ENCODE measurements at regions of chr14 and their contacts with region 1.

Region 1: DNA sequence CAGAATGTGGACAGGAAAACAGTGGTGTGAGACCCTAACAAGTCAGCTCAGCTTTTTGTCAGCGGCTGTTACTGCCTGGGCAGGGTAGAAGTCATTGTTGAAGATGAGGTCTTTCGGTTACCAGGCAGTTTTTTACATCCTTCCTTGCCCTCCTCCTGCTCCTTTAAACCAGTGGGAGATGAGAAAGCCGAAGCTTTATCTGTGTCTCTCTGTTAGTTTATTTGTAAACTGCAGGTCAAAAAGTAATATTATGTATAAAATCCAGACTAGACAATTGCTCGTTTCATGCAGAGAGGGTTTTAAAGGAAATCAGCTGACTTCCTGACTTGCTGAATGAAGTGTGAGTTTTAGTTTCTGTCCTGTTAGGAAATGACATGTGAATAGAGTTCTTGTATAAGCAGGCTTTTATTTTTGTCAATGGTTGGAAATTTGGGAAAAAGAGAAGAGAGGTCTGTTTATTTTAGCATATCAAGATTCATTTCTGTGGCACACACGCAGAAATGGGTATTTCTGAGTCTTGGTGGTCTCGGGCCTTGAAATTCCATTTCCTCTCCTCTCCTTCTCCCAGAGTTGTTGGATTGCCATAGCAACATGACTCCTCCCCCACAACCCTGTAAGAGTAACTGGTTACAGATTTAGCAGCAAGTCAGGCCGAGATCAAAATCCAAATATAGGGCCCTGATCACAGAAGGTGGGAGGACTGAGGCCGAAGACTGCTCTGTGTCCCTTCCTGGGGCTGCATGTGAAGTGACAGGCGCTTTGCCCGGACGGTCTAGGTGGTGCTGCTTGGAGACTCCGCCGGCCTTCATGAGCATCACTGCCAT is 60.8 kb downstream of the SAMD4A start:
- DNase-seq: peak; percentile 57
- ATAC-seq: peak; percentile 82
- H3K4me3 ChIP-seq: peak overlapping the region; percentile 39; the same call in 1 of the 2 replicates
- H3K27ac ChIP-seq: peak overlapping the region; percentile 51
- H3K4me1 ChIP-seq: peaks cover 19% of the 10 kb centered on the region
- H3K27me3 ChIP-seq: no peaks in the 10 kb centered on the region
- CTCF ChIP-seq: no peak
- EP300 ChIP-seq: 0 out of 4 replicates have a peak, but pooled peaks of 1 of the 2 experiments have one; percentile 35
- POLR2A ChIP-seq: no peak
- RAD21 ChIP-seq: no peak

Region 2: GRCh38 chr14:53915364-53916014 is 712.3 kb before region 1 on chr14:
- CTCF ChIA-PET with region 1: no interaction called
- POLR2A ChIA-PET with region 1: no interaction called
- RAD21 ChIA-PET with region 1: no interaction called
- SMC1A ChIA-PET with region 1: no interaction called
- in situ Hi-C with region 1: no loop called
- intact Hi-C with region 1: no loop called
- DNase-seq: no peak
- ATAC-seq: no peak
- H3K4me3 ChIP-seq: no peak overlapping the region
- H3K27ac ChIP-seq: no peak overlapping the region
- H3K4me1 ChIP-seq: no peaks in the 10 kb centered on the region
- H3K27me3 ChIP-seq: no peaks in the 10 kb centered on the region
- CTCF ChIP-seq: no peak
- EP300 ChIP-seq: no peak
- POLR2A ChIP-seq: no peak
- RAD21 ChIP-seq: no peak

Region 3: DNA sequence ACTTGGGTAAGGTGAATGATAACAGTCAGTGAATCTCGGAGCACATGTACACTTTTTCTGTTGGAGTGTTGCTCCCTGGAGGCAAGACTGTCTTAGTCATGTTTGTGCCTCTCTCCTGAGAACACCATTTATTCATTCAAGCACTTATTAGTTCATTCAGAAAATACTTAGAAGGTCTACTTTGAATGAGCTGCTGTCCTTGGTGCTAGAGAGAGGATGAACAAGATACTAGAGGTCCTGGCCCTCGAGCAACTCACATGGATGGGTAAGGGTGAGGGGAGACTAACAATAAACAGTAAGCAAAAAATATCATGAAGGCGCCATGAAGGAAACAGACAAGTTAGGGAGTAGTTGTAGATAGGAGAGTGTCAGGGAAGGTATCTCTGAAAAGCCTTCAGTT is 77.9 kb before region 1 on chr14:
- CTCF ChIA-PET with region 1: no interaction called
- POLR2A ChIA-PET with region 1: no interaction called
- RAD21 ChIA-PET with region 1: no interaction called
- SMC1A ChIA-PET with region 1: no interaction called
- in situ Hi-C with region 1: no loop called
- intact Hi-C with region 1: no loop called
- DNase-seq: no peak
- ATAC-seq: no peak
- H3K4me3 ChIP-seq: no peak overlapping the region
- H3K27ac ChIP-seq: no peak overlapping the region
- H3K4me1 ChIP-seq: no peaks in the 10 kb centered on the region
- H3K27me3 ChIP-seq: no peaks in the 10 kb centered on the region
- CTCF ChIP-seq: no peak
- EP300 ChIP-seq: no peak
- POLR2A ChIP-seq: no peak
- RAD21 ChIP-seq: no peak

Region 4: GRCh38 chr14:54642801-54643697 is 15.3 kb after region 1 on chr14:
- CTCF ChIA-PET with region 1: interaction called, 12 read pairs
- POLR2A ChIA-PET with region 1: interaction called, 3 read pairs
- RAD21 ChIA-PET with region 1: interaction called, 4 read pairs
- SMC1A ChIA-PET with region 1: interaction called, 8 read pairs
- in situ Hi-C with region 1: no loop called
- intact Hi-C with region 1: no loop called
- DNase-seq: no peak
- ATAC-seq: peak; percentile 76
- H3K4me3 ChIP-seq: no peak overlapping the region
- H3K27ac ChIP-seq: no peak overlapping the region
- H3K4me1 ChIP-seq: no peaks in the 10 kb centered on the region
- H3K27me3 ChIP-seq: 0 out of 4 replicates have a peak, but pooled peaks cover 0 to 3% of the 10 kb centered on the region in 2 experiments
- CTCF ChIP-seq: peak; percentile 29 to 58 (median 35); a peak in 5 of 6 replicates
- EP300 ChIP-seq: no peak
- POLR2A ChIP-seq: no peak
- RAD21 ChIP-seq: peak; percentile 56

Measured in GM12878 (cell line).